ENCODE measurements at regions of chr1 and their contacts with region 1.

Region 1: GRCh38 chr1:11777658-11778322 is 15.8 kb downstream of the C1orf167 start:
- DNase-seq: no peak

Region 2: GRCh38 chr1:11813021-11813420 is 35.2 kb after region 1 on chr1:
- intact Hi-C with region 1: loop called (anchors 5 kb)
- DNase-seq: no peak

Measured in cardiac septum (tissue), 1 donor.